OCI-LY7 (cell line): ENCODE measurements at regions of chr22 and their contacts with region 1.

Region 1: DNA sequence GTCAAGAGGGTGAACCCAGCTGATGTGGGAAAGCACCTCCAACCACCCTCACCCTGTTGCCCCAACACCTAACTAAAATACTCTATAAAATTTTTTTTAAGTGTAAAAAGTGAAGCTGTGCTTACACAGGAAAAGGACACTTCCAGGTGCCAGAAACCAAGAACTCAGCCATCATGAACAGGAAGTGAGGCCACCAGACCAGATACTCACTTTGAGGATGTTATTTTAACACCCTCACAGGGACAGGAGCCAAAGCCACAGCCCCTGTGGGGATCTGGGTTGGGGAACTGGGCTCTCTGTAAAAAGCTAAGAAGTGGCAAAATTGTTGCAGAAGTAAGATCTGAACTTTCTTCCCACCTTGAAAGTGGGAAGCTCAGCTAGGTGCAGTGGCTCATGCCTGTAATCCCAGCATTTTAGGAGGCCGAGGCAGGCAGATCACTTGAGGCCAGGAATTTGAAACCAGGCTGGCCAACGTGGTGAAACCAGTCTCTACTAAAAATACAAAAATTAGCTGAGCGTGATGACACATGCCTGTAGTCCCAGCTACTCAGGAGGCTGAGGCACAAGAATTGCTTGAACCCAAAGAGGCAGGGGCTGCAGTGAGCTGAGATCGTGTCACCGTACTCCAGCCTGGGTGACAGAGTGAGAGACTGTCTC is 3.8 kb downstream of the RSPH14 start:
- DNase-seq: peak; percentile 89
- H3K4me3 ChIP-seq: peak overlapping the region; percentile 35
- H3K27ac ChIP-seq: peak overlapping the region; percentile 94
- H3K4me1 ChIP-seq: peaks cover 64% of the 10 kb centered on the region
- CTCF ChIP-seq: no peak

Region 2: GRCh38 chr22:22865311-22866072 is 272.5 kb before region 1 on chr22:
- CTCF ChIA-PET with region 1: no interaction called
- POLR2A ChIA-PET with region 1: no interaction called
- intact Hi-C with region 1: loop called (anchors 5 kb)
- DNase-seq: peak; percentile 99
- H3K4me3 ChIP-seq: peak overlapping the region; percentile 32
- H3K27ac ChIP-seq: peak overlapping the region; percentile 92
- H3K4me1 ChIP-seq: peaks cover 92% of the 10 kb centered on the region
- CTCF ChIP-seq: no peak

Region 3: GRCh38 chr22:23069502-23070357 is 68.3 kb before region 1 on chr22:
- CTCF ChIA-PET with region 1: no interaction called
- POLR2A ChIA-PET with region 1: no interaction called
- intact Hi-C with region 1: no loop called
- DNase-seq: peak; percentile 93
- H3K4me3 ChIP-seq: peak overlapping the region; percentile 62
- H3K27ac ChIP-seq: no peak overlapping the region
- H3K4me1 ChIP-seq: peaks cover 81% of the 10 kb centered on the region
- CTCF ChIP-seq: no peak

Region 4: GRCh38 chr22:23152315-23153113 is 14.5 kb after region 1 on chr22:
- CTCF ChIA-PET with region 1: no interaction called
- POLR2A ChIA-PET with region 1: interaction called, 17 read pairs
- intact Hi-C with region 1: no loop called
- DNase-seq: peak; percentile 79
- H3K4me3 ChIP-seq: peak overlapping the region; percentile 43
- H3K27ac ChIP-seq: peak overlapping the region; percentile 40
- H3K4me1 ChIP-seq: peaks cover 56% of the 10 kb centered on the region
- CTCF ChIP-seq: no peak